ENCODE measurements at regions of chr21 and their contacts with region 1.

Region 1: DNA sequence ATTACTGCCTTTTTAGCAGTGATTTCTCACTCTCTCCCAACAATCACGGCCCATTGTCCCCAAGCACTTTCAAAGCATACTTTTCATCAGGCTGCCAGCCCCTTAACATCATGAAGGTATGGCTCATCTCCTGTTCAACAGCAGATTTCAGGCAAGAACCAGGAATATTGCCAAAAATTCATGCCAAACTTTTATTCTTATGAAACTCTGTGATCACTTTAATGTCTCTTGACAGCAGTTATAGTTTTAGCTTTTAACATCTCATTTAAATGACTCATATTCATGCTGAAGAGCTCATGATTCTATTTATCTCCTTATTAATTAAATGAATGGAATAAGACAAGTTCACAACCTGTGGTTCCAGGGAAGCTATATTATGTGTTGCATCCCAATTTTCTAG is 235.1 kb downstream of the GRIK1 start:
- DNase-seq: no peak
- ATAC-seq: no peak
- H3K4me3 ChIP-seq: no peak overlapping the region
- H3K27ac ChIP-seq: no peak overlapping the region
- H3K4me1 ChIP-seq: no peaks in the 10 kb centered on the region
- H3K27me3 ChIP-seq: no peaks in the 10 kb centered on the region
- CTCF ChIP-seq: no peak
- EP300 ChIP-seq: no peak
- POLR2A ChIP-seq: no peak
- RAD21 ChIP-seq: no peak

Region 2: GRCh38 chr21:29664615-29665014 is 40.1 kb before region 1 on chr21:
- CTCF ChIA-PET with region 1: no interaction called
- POLR2A ChIA-PET with region 1: no interaction called
- RAD21 ChIA-PET with region 1: no interaction called
- SMC1A ChIA-PET with region 1: no interaction called
- in situ Hi-C with region 1: no loop called
- intact Hi-C with region 1: loop called (anchors 2 kb)
- DNase-seq: no peak
- ATAC-seq: no peak
- H3K4me3 ChIP-seq: no peak overlapping the region
- H3K27ac ChIP-seq: no peak overlapping the region
- H3K4me1 ChIP-seq: no peaks in the 10 kb centered on the region
- H3K27me3 ChIP-seq: no peaks in the 10 kb centered on the region; a peak in 1 of 4 replicates
- CTCF ChIP-seq: no peak
- EP300 ChIP-seq: no peak
- POLR2A ChIP-seq: no peak
- RAD21 ChIP-seq: no peak

Region 3: GRCh38 chr21:29888437-29888836 is 183.7 kb after region 1 on chr21:
- CTCF ChIA-PET with region 1: no interaction called
- POLR2A ChIA-PET with region 1: no interaction called
- RAD21 ChIA-PET with region 1: no interaction called
- SMC1A ChIA-PET with region 1: no interaction called
- in situ Hi-C with region 1: no loop called
- intact Hi-C with region 1: no loop called
- DNase-seq: no peak
- ATAC-seq: no peak
- H3K4me3 ChIP-seq: no peak overlapping the region
- H3K27ac ChIP-seq: no peak overlapping the region
- H3K4me1 ChIP-seq: no peaks in the 10 kb centered on the region
- H3K27me3 ChIP-seq: no peaks in the 10 kb centered on the region
- CTCF ChIP-seq: no peak
- EP300 ChIP-seq: no peak
- POLR2A ChIP-seq: no peak
- RAD21 ChIP-seq: no peak

Measured in GM12878 (cell line).